ENCODE measurements at regions of chr13 and their contacts with region 1.

Region 1: DNA sequence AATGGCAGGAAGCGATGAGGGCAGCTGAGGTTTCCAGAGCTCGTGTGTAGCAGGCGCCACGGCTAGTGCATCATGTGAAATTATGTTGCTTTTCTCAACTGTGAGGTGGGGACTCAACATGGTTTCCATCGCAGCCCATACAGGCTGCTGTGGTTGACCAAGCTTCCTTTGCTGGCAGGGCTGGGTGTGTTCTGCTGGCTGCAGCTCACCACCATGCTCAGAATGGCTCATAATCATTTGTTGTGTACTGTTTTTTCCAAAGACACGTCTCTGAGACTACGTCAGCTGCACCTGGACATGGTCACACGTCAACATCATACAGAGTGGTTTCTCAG is 16.1 kb upstream of the RASA3 start:
- DNase-seq: peak; percentile 61 to 98 (median 89)
- ATAC-seq: peak; percentile 92 to 95 (median 93)
- H3K4me3 ChIP-seq: peak overlapping the region in 1 of 2 donors; percentile 1
- H3K4me3 Mint-ChIP-seq: peak overlapping the region; percentile 55 to 86 (median 61)
- H3K27ac ChIP-seq: peak overlapping the region; percentile 96
- H3K27ac Mint-ChIP-seq: peak overlapping the region; percentile 99
- H3K4me1 ChIP-seq: peaks cover 59 to 97% of the 10 kb centered on the region in 2 experiments
- H3K4me1 Mint-ChIP-seq: peaks cover 57 to 86% (median 85%) of the 10 kb centered on the region in 3 donors
- H3K27me3 ChIP-seq: no peaks in the 10 kb centered on the region
- H3K27me3 Mint-ChIP-seq: no peaks in the 10 kb centered on the region

Region 2: GRCh38 chr13:113981201-113981605 is 167.3 kb before region 1 on chr13:
- CTCF ChIA-PET with region 1: no interaction called
- POLR2A ChIA-PET with region 1: no interaction called
- DNase-seq: no peak
- ATAC-seq: no peak
- H3K4me3 ChIP-seq: no peak overlapping the region
- H3K4me3 Mint-ChIP-seq: no peak overlapping the region
- H3K27ac ChIP-seq: no peak overlapping the region
- H3K27ac Mint-ChIP-seq: peak overlapping the region in 1 of 2 donors; percentile 43
- H3K4me1 ChIP-seq: peaks cover 0 to 3% of the 10 kb centered on the region in 2 experiments
- H3K4me1 Mint-ChIP-seq: peaks cover 0 to 5% (median 2%) of the 10 kb centered on the region in 3 donors
- H3K27me3 ChIP-seq: no peaks in the 10 kb centered on the region
- H3K27me3 Mint-ChIP-seq: no peaks in the 10 kb centered on the region

Region 3: DNA sequence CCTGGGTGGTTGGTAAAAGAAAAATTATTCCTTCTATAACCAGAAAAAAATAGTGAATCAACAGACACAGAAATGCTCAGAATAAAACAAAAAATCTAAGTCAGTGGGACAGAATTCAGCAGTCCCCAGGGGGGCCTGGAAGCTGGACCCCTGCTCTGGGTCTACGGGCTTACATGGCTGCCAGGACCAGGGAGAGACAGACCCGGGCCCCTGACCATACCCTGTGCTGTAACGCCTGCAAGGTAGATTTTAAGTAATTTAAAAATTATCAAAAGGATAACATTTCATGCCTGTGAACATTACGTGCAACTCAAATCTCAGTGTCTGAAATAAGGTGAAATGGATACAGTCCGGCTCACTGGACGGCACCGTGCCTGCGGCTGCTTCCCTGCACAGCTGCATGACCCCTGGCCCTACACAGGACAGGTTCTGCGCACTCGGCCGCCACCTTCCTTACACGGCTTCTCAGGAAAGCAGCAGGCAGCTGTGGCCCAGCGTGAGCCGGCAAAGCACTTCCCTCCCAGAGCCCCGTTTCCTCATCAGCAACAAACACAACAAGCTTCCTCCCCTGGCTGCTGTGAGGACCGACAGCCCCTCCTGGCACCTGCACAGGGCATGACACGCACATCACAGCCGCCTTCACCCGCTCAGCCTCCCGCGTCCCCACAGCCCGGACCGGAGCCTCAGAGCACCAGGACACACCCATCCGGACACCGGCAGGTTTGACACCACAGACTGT is 38.2 kb before region 1 on chr13:
- CTCF ChIA-PET with region 1: interaction called in 1 of 2 experiments, 10 read pairs
- POLR2A ChIA-PET with region 1: interaction called, 4 to 5 read pairs
- DNase-seq: peak; percentile 58 to 89 (median 81)
- ATAC-seq: peak; percentile 82 to 94 (median 89)
- H3K4me3 ChIP-seq: peak overlapping the region; percentile 40 to 60
- H3K4me3 Mint-ChIP-seq: peak overlapping the region; percentile 80 to 90 (median 85)
- H3K27ac ChIP-seq: peak overlapping the region; percentile 77
- H3K27ac Mint-ChIP-seq: peak overlapping the region; percentile 94 to 95
- H3K4me1 ChIP-seq: peaks cover 31 to 96% of the 10 kb centered on the region in 2 experiments
- H3K4me1 Mint-ChIP-seq: peaks cover 78 to 85% (median 85%) of the 10 kb centered on the region in 3 donors
- H3K27me3 ChIP-seq: no peaks in the 10 kb centered on the region
- H3K27me3 Mint-ChIP-seq: no peaks in the 10 kb centered on the region

Region 4: GRCh38 chr13:114130837-114131582 is 17.5 kb before region 1 on chr13:
- CTCF ChIA-PET with region 1: interaction called in 1 of 2 experiments, 4 read pairs
- POLR2A ChIA-PET with region 1: interaction called, 3 to 10 read pairs
- DNase-seq: peak; percentile 54 to 86 (median 73)
- ATAC-seq: peak; percentile 33 to 54 (median 42)
- H3K4me3 ChIP-seq: peak overlapping the region; percentile 91 to 98
- H3K4me3 Mint-ChIP-seq: peak overlapping the region; percentile 97 to 100 (median 99)
- H3K27ac ChIP-seq: peak overlapping the region; percentile 67
- H3K27ac Mint-ChIP-seq: peak overlapping the region; percentile 95 to 99
- H3K4me1 ChIP-seq: peaks cover 35 to 67% of the 10 kb centered on the region in 2 experiments
- H3K4me1 Mint-ChIP-seq: peaks cover 59 to 72% (median 69%) of the 10 kb centered on the region in 3 donors
- H3K27me3 ChIP-seq: no peaks in the 10 kb centered on the region
- H3K27me3 Mint-ChIP-seq: no peaks in the 10 kb centered on the region